Cardiac septum (tissue), 1 donor: ENCODE measurements at regions of chr4 and their contacts with region 1.

Region 1: DNA sequence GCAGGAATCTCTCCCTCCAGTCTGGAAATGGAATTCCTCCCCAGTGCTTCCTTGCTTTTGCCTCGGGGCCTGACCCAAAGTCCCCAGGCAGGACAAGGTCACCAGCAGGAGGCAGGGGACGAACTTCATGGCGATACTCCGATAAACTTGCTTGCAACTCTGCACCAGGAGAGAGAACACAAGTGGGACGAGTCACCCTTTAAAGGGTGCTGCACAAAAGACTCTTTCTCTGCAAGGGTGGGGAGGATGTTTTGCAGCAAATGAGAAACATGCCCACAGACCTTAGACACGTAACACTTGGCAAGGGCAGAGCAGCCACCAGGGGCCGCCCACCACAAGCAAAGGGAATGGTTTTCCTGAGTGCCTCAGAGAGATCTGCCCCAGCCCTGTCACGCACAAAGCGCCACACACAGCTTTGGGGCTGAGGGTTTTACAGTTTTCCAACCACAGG is at the start of gene FGFBP2:
- DNase-seq: no peak
- total RNA-seq, gene FGFBP2: 2.6 TPM

Region 2: GRCh38 chr4:15737255-15737654 is 225.8 kb before region 1 on chr4:
- intact Hi-C with region 1: no loop called
- DNase-seq: no peak

Region 3: GRCh38 chr4:16001484-16001858 is 38.4 kb after region 1 on chr4:
- intact Hi-C with region 1: loop called (anchors 5 kb)
- DNase-seq: no peak

Region 4: GRCh38 chr4:16082426-16083240 is 119.6 kb after region 1 on chr4:
- intact Hi-C with region 1: no loop called
- DNase-seq: peak; percentile 78